HCT116 (cell line): ENCODE measurements at regions of chr15 and their contacts with region 1.

Region 1: GRCh38 chr15:67042551-67043142 is 22.8 kb upstream of the SMAD3 start:
- DNase-seq: no peak
- ATAC-seq: 0 out of 2 replicates have a peak, but pooled peaks have one; percentile 7
- H3K4me3 ChIP-seq: peak overlapping the region; percentile 8 to 41; a peak in 3 of 4 replicates
- H3K27ac ChIP-seq: no peak overlapping the region; the same call in 1 of the 2 replicates
- H3K4me1 ChIP-seq: peaks cover 14 to 15% of the 10 kb centered on the region in 2 experiments
- H3K27me3 ChIP-seq: no peaks in the 10 kb centered on the region
- CTCF ChIP-seq: no peak
- POLR2A ChIP-seq: no peak
- RAD21 ChIP-seq: no peak

Region 2: DNA sequence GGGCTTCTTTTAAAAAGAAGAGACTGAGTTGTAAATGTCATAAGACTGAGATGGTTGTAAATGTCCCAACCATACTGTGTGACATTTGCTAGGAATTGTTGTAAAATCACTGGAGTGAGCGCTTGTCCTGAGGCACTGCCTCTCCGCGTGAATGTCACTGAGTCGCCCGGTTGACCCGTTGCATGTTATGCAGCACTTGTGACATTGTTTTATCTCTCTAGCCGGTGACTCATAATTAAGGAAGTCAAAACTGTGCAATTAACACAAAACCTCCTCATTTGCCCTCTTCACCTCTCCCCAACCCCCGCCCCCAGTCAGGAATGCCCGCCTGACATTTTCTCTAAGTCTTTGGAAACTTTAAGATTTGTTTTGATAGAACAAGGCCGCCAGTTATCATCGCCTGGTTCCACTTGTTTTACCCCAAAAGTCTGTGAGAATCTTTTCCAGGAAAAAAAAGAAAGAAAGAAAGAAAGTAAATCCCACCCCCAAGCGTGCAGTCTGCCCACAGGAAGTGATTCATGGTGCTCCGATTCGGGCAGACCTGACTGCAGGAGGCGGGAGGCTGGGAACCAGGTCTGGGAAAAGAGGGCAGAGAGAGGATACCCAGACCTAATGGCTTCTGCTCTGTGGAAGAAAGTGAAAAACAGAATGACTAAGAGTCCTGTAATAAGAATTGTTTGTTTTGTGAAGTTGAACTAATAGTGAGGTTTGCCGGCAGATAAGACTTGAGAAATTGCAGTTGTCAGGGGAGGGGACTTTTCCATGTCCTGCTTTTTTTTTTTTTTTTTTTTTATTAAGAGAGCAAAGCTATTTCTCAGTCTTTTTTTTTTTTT is 107.6 kb after region 1 on chr15:
- CTCF ChIA-PET with region 1: no interaction called
- POLR2A ChIA-PET with region 1: no interaction called
- RAD21 ChIA-PET with region 1: interaction called, 3 to 12 read pairs
- intact Hi-C with region 1: no loop called
- DNase-seq: peak; percentile 96
- ATAC-seq: peak; percentile 85
- H3K4me3 ChIP-seq: peak overlapping the region; percentile 7 to 30
- H3K27ac ChIP-seq: peak overlapping the region; percentile 84
- H3K4me1 ChIP-seq: peaks cover 67 to 95% of the 10 kb centered on the region in 2 experiments
- H3K27me3 ChIP-seq: no peaks in the 10 kb centered on the region
- CTCF ChIP-seq: no peak
- POLR2A ChIP-seq: no peak
- RAD21 ChIP-seq: no peak